Transverse colon (tissue), 4 donors: ENCODE measurements at regions of chr13 and their contacts with region 1.

Region 1: DNA sequence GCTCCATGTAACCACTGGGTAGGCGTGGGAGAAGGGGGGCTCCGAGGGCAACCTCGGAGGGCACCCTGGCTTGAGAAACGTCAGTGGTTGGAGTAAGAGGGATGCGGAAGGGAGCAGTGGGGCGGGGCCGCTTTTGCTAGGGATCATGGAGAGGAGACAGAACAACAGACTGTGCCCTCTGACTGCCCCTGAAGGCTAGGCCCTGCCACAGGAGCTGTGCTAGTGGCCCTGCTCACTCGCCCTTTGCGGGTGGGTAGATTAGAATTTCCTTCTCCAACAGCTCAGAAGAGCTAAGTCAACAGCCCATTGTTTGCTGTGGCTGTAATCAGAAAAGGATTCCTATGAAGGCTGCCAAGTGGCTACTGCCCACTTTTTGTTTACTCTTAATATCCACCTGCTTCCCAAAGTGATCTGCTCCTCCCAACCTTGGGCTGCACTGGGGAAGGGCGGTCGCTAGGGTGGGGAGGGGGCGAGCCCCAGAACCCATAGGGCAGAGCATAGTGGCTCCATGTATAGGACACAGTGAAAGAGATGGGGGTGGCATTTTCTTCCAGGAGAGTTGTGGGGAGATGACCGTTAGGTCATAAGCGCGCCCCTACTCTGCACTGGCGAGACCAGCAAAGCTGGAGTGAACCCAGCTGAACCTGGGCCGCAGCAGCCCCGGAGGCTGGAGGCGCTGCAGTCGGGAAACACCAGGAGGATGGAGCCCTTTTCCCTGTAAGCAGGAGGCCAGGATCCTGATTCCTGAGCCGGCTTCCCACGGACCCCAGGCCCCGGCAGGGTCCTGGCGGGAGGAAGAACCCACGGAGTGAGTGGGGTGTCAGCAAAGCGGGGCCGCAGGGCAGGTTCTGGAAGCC is 1.9 kb upstream of the C1QTNF9 start:
- DNase-seq: peak; percentile 33
- H3K4me3 ChIP-seq: no peak overlapping the region
- H3K27ac ChIP-seq: peak overlapping the region in 2 of 4 donors; percentile 18 to 36
- H3K4me1 ChIP-seq: peaks cover 0 to 10% (median 3%) of the 10 kb centered on the region in 4 donors
- H3K27me3 ChIP-seq: no peaks in the 10 kb centered on the region
- CTCF ChIP-seq: no peak
- EP300 ChIP-seq: no peak
- POLR2A ChIP-seq: no peak

Region 2: GRCh38 chr13:24280720-24281119 is 26.7 kb before region 1 on chr13:
- in situ Hi-C with region 1: no loop called
- intact Hi-C with region 1: loop called (anchors 1 kb)
- DNase-seq: no peak
- H3K4me3 ChIP-seq: no peak overlapping the region
- H3K27ac ChIP-seq: no peak overlapping the region
- H3K4me1 ChIP-seq: peaks cover 0 to 19% (median 5%) of the 10 kb centered on the region in 4 donors
- H3K27me3 ChIP-seq: no peaks in the 10 kb centered on the region
- CTCF ChIP-seq: no peak
- EP300 ChIP-seq: no peak
- POLR2A ChIP-seq: no peak